Colonic mucosa (tissue), 4 donors: ENCODE measurements at regions of chr20 and their contacts with region 1.

Region 1: GRCh38 chr20:23441850-23442313 is 2.4 kb downstream of the CSTL1 start:
- DNase-seq: peak; percentile 73
- H3K4me3 ChIP-seq: no peak overlapping the region
- H3K27ac ChIP-seq: no peak overlapping the region
- H3K4me1 ChIP-seq: no peaks in the 10 kb centered on the region
- H3K27me3 ChIP-seq: no peaks in the 10 kb centered on the region
- CTCF ChIP-seq: peak; percentile 77

Region 2: GRCh38 chr20:22333885-22334545 is 1107.9 kb before region 1 on chr20:
- intact Hi-C with region 1: loop called (anchors 5 kb)
- DNase-seq: peak; percentile 56
- H3K4me3 ChIP-seq: no peak overlapping the region
- H3K27ac ChIP-seq: no peak overlapping the region
- H3K4me1 ChIP-seq: no peaks in the 10 kb centered on the region
- H3K27me3 ChIP-seq: peaks cover 4% of the 10 kb centered on the region
- CTCF ChIP-seq: peak; percentile 62

Region 3: DNA sequence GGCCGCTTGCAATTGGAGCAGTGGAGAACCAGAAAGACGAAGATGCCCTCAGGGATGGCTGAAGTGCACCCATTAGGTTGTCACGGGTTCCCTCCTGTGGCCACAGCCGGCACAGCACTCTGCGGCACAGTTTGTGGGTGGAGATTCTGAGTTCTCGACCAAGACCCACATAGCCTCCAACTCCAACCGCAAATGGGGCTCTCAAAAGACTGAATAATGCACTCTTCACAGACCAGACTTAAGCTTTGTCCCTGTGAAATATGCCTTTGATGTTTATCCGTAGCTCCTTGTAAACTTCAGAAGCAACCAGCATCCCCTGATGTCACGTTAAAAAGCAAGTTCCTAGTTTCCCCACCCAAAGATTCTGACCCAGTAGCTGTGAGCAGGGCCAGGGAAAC is 164.8 kb after region 1 on chr20:
- intact Hi-C with region 1: loop called (anchors 5 kb)
- DNase-seq: peak; percentile 82
- H3K4me3 ChIP-seq: no peak overlapping the region
- H3K27ac ChIP-seq: no peak overlapping the region
- H3K4me1 ChIP-seq: no peaks in the 10 kb centered on the region
- H3K27me3 ChIP-seq: no peaks in the 10 kb centered on the region
- CTCF ChIP-seq: peak; percentile 86